ENCODE measurements at regions of chr10 and their contacts with region 1.

Region 1: DNA sequence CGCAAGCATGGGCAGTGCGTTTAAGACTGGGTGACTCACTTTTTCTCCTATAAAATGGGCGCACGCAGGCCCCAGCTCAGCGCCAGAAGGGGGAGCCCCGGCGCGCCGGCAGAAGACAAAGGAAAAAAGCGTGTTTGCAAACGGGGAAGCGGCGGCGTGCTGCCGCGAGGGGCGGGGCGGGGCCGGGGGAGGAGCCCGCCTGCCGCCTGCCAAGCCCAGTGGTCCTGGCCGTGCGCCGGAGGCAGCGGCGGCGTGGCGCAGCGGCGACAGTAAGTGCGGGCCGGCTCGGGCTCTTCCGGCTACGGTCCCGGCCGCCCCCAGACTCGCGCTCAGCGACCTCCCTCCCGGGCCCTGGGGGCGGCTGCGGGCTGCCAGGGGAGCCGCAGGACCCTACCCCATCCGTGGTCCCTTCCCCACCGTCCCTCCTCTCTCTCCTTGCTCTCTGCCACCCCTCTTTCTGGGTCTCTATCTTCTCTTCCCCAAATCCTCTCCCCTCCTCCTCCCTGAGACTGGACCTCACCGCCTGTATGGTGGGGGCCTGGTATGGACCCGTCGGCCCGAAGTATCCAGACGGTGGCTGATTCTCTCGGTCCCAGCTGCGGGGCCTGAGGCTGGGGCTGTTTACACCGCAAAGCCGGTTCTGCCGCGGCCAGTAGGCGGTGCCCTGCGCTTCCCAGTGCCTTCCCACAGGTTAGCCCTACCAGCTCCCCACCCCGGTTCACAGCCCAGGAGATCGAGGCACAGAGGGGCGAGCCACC is at the start of gene SLC29A3:
- DNase-seq: peak; percentile 84 to 90
- ATAC-seq: peak; percentile 92
- total RNA-seq, gene SLC29A3: 4.1 to 6.7 TPM

Region 2: DNA sequence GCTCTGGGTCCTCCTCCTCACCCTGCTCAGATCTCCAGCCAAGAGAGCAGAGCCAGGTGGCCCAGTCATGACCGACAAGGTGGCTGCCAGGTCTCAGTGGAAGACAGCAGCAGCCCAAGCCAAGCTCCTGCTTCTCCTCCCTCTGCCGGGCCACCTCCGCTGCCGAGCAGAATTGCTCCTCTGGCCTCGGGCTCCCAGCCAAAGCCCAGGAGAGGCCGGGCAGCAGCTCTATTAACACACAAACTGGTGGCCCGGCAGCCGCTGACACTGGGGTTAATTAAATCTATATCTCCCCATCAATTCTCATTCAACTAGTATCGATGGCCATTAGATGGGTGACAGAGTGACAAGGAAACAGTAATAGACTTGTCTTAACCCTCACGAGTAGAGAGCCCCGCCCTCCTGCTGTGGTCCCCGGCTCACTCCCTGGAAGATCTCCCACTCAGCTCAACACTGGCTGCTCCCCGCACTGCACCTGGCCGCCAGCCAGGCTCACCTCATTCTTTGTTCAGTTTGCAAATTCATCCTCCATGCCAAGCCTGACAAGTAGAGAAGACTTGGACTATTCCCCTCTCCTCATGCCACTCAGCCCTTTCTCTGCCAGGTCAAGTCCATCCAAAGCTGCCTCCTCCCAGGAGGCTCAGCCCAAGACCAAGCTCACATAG is 180.9 kb before region 1 on chr10:
- intact Hi-C with region 1: no loop called
- DNase-seq: no peak
- ATAC-seq: no peak

Region 3: GRCh38 chr10:71696628-71697326 is 377.6 kb after region 1 on chr10:
- intact Hi-C with region 1: loop called (anchors 5 to 10 kb)
- DNase-seq: peak; percentile 55 to 89
- ATAC-seq: peak; percentile 86

Region 4: GRCh38 chr10:71708301-71708703 is 389.1 kb after region 1 on chr10:
- intact Hi-C with region 1: loop called in 1 of 2 experiments (anchors 10 kb)
- DNase-seq: peak in 1 of 2 donors; percentile 74
- ATAC-seq: peak; percentile 73

Region 5: DNA sequence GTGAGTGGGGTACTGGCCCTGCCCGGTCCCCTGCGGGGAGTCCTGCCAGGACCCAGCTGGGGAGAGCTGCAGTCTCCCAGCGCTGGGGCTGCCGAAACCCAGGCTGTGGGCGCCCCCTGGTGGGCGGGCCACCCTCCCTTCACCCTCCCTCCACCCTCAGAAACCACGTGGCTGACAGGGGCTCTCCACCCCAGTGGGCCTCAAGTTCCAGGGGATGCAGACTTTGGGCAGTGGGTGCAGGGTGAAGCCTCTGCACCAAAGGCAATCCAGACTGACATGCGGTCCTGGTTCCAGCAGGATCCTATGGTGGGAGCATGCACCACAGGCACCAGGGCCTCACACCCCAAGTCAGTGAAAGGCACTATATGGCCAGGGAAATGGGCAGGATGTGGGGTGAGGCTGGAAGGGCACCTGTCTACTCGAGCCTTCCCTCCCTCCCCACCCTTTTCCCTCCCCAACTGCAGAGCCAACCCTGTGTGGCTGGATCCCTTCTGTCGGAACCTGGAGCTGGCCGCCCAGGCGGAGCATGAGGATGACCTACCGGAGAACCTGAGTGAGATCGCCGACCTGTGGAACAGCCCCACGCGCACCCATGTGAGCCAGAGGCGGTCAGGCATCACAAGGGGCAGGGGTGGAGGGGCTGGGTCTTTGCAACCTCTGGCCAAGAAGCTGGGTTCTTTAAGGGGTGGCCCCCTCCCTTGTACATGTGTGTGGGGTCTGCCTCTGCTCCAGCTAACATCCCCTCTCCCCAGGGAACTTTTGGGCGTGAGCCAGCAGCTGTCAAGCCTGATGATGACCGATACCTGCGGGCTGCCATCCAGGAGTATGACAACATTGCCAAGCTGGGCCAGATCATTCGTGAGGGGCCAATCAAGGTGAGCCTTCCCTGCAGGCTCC is 493.0 kb after region 1 on chr10:
- intact Hi-C with region 1: loop called (anchors 10 kb)
- DNase-seq: peak; percentile 53 to 82
- ATAC-seq: peak; percentile 89